Activated naive CD4-positive, alpha-beta T cell treated with anti-CD3 and anti-CD28 coated beads, Interleukin-2, amount 10 ng/mL, durations not matched to agents 7 days and 5 days (primary cell): ENCODE measurements at regions of chr3 and their contacts with region 1.

Region 1: DNA sequence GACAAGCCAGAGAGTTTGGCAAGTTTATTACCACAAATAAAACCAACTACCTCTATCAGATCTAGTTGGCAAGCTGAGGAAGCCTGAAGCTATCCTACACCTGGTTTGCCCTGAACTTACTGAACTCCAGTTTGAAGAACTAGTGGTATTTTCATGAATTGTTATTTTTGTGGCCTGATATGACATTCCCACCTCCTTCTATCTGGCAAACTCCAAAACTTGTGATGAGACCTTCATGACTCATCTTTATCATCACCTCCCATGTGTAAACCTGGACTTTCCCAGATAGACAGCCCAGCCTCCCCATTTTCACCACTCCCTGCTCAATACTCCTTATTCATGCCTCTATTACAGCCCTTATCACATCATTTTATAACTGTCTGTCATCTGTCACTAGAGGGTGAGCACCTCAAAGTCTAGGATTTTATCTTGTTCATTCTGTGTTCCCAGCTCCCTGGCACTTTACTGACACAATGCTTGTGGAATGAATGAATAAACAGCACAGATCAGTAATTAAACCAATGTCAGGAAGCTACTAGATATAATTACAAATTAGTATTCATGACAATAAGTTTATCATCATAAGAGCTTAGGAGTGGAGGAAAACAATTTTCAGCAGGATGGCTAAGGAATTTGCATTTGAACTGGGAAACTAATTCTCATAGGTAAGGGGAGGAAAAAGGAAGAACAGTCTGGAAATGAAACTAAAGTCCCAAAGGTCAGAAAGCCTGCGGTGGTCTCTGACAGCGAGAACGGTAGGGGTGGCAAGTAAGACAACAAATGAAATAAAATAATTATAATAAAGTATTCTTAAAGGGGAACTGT is 13.2 kb upstream of the TRANK1 start:
- DNase-seq: no peak
- H3K4me3 Mint-ChIP-seq: no peak overlapping the region
- H3K27ac Mint-ChIP-seq: no peak overlapping the region
- H3K4me1 Mint-ChIP-seq: peaks cover 11% of the 10 kb centered on the region
- H3K27me3 Mint-ChIP-seq: peaks cover 4% of the 10 kb centered on the region

Region 2: GRCh38 chr3:36734742-36735141 is 223.3 kb before region 1 on chr3:
- CTCF ChIA-PET with region 1: interaction called, 20 read pairs
- DNase-seq: no peak
- H3K4me3 Mint-ChIP-seq: no peak overlapping the region
- H3K27ac Mint-ChIP-seq: no peak overlapping the region
- H3K4me1 Mint-ChIP-seq: no peaks in the 10 kb centered on the region
- H3K27me3 Mint-ChIP-seq: peaks cover 15% of the 10 kb centered on the region

Region 3: DNA sequence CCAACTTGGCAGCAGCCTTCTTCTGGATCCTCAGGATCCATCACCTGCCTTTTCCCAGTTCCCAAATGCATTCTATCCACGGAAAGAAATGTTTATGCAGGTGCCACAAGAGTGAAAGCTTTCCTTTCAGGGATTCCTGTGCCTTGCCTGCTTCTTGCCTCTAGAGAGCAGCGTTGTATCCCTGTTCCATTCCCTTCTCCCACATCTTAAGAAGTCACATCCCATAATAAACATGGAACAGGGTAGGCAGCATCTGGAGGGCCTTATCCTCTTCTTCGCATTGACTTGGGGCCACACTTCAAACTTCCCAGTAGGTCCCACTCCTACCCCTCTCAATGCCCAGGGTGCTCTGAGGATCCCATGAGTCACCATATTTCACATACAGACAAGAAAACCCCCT is 121.0 kb before region 1 on chr3:
- CTCF ChIA-PET with region 1: interaction called, 13 read pairs
- DNase-seq: no peak
- H3K4me3 Mint-ChIP-seq: no peak overlapping the region
- H3K27ac Mint-ChIP-seq: no peak overlapping the region
- H3K4me1 Mint-ChIP-seq: peaks cover 8% of the 10 kb centered on the region
- H3K27me3 Mint-ChIP-seq: no peaks in the 10 kb centered on the region

Region 4: GRCh38 chr3:36876181-36876936 is 81.7 kb before region 1 on chr3:
- CTCF ChIA-PET with region 1: interaction called, 10 read pairs
- DNase-seq: peak; percentile 40
- H3K4me3 Mint-ChIP-seq: peak overlapping the region; percentile 64
- H3K27ac Mint-ChIP-seq: peak overlapping the region; percentile 97
- H3K4me1 Mint-ChIP-seq: peaks cover 42% of the 10 kb centered on the region
- H3K27me3 Mint-ChIP-seq: peaks cover 3% of the 10 kb centered on the region

Region 5: GRCh38 chr3:36907911-36908646 is 50.0 kb before region 1 on chr3:
- CTCF ChIA-PET with region 1: interaction called, 78 read pairs
- DNase-seq: peak; percentile 79
- H3K4me3 Mint-ChIP-seq: peak overlapping the region; percentile 97
- H3K27ac Mint-ChIP-seq: peak overlapping the region; percentile 98
- H3K4me1 Mint-ChIP-seq: peaks cover 68% of the 10 kb centered on the region
- H3K27me3 Mint-ChIP-seq: no peaks in the 10 kb centered on the region

Region 6: DNA sequence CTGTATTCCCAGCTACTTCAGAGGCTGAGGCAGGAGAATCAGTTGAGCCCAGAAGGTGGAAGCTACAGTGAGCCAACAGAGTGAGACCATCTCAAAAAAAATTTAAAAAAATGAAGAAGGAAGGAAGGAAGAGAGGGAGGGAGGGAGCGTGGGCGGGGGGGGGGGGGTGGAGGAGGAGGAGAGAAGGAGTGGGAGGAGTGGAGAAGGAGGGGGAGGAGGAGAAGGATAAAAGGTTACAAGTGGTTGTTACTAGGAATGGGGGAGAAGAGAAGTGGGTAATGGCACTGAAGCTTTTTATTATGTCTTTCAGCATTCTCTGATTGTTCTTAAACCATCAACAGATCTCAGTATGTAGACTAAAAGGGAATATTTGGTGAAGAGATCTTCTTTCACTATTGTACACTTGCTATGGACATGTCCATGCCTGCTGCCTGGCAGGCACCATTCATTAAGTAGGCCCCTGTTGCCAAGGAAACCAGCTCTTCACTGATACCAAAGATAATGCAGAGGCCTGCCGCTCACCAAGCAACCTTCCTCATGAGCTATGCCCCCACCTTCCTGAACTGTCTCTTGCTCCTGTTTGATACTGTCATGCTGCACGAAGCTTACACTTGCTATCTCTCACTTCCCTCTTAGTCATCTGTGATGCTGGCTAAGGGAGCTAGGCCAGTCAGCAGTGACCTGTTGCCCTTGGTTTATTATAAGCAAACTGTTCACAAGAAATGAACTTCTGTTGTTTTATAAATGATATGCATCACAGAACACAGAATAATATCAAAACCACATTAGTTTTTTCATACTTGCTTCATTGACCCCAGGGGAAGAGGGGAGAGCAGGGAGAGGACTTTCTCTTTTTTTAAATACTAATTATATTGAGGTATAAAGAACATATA is 11.7 kb after region 1 on chr3:
- CTCF ChIA-PET with region 1: interaction called, 16 read pairs
- DNase-seq: peak; percentile 46
- H3K4me3 Mint-ChIP-seq: no peak overlapping the region
- H3K27ac Mint-ChIP-seq: no peak overlapping the region
- H3K4me1 Mint-ChIP-seq: peaks cover 36% of the 10 kb centered on the region
- H3K27me3 Mint-ChIP-seq: no peaks in the 10 kb centered on the region